Activated CD4-positive, alpha-beta T cell treated with anti-CD3 and anti-CD28 coated beads, Interleukin-2, amount 10 ng/mL, durations not matched to agents 24 days and 14 days (primary cell): ENCODE measurements at regions of chr11 and their contacts with region 1.

Region 1: GRCh38 chr11:10405855-10406592 is 49.0 kb upstream of the AMPD3 start:
- DNase-seq: peak; percentile 83
- H3K4me3 Mint-ChIP-seq: no peak overlapping the region
- H3K27ac Mint-ChIP-seq: no peak overlapping the region
- H3K4me1 Mint-ChIP-seq: peaks cover 18% of the 10 kb centered on the region
- H3K27me3 Mint-ChIP-seq: peaks cover 3% of the 10 kb centered on the region

Region 2: GRCh38 chr11:10285148-10285802 is 120.7 kb before region 1 on chr11:
- intact Hi-C with region 1: no loop called
- DNase-seq: no peak
- H3K4me3 Mint-ChIP-seq: peak overlapping the region; percentile 24
- H3K27ac Mint-ChIP-seq: no peak overlapping the region
- H3K4me1 Mint-ChIP-seq: peaks cover 6% of the 10 kb centered on the region
- H3K27me3 Mint-ChIP-seq: peaks cover 21% of the 10 kb centered on the region

Region 3: GRCh38 chr11:10444725-10445315 is 38.8 kb after region 1 on chr11:
- intact Hi-C with region 1: no loop called
- DNase-seq: peak; percentile 57
- H3K4me3 Mint-ChIP-seq: no peak overlapping the region
- H3K27ac Mint-ChIP-seq: no peak overlapping the region
- H3K4me1 Mint-ChIP-seq: peaks cover 41% of the 10 kb centered on the region
- H3K27me3 Mint-ChIP-seq: peaks cover 24% of the 10 kb centered on the region

Region 4: DNA sequence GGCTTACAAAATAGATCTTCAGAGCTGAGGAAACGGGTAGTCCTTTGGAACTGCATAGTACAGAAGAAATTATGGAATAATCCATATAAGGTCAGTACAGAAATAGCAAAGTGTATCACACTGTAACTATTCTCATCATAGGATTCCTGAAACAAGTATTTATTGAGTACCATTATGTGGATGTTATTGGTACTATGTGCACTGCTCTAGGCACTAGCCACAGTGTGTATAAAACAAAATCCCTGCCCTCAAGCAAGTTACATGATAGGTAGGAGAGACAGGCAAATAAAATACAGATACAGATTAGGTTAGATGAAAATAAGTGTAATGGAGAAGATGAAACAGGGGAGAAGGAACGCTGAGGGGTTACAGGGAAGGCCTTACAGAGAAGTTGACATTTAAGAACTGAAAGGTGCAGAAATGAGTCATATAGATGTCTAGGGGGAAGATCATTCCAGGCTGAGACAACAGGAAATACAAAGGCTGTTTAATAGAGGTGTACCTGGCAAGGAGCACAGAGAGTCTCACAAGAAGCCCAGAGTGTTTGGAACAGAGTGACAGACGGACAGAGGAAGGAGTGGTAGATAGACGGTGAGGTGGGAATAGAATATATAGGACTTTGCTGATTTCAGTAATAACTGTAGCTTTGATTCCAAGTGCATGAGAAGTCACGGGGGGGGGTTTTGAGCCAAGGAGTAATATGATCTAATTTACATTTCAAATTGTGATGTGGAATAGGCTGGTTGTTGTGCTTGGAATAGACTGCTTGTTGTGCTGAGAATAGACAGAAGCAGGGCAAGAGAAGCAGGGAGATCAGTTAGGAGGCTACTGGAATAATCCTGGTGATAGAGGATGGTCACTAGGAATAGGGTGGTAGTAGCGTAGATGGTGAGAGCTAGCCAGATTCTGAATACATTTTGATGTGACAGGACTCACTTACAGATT is 121.2 kb after region 1 on chr11:
- intact Hi-C with region 1: loop called (anchors 5 kb)
- DNase-seq: no peak
- H3K4me3 Mint-ChIP-seq: peak overlapping the region; percentile 30
- H3K27ac Mint-ChIP-seq: peak overlapping the region; percentile 53
- H3K4me1 Mint-ChIP-seq: peaks cover 18% of the 10 kb centered on the region
- H3K27me3 Mint-ChIP-seq: no peaks in the 10 kb centered on the region

Region 5: DNA sequence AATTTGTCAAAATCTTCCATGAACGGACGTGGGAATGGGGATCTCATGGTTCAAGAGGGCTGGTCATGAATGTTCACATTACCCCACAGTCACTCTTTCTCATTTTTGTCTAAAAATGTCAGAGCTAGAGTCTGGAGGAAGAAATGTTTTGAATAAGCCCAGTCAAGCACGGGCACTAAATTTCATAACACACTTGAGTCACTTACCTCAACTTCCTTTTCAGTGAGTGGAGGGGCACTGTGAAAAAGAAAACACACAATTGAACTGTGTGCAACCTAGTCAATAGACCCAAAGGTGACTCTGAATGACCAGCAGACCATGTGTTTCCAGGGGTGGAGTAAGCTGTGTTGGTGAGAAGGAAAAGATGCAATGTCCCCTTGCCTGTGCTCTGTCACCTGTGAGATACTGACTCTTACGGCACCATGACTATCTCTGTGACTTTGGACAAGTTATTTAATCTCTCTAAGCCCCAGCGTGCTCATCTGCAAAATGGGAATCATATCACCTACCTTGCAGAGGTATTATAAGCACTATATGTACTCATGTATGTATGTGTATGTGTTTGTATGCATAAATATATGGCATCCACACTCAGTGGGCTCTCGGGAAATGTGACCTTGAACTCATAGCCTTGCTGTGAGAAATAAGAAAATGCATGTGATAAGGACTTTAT is 200.6 kb after region 1 on chr11:
- intact Hi-C with region 1: no loop called
- DNase-seq: no peak
- H3K4me3 Mint-ChIP-seq: no peak overlapping the region
- H3K27ac Mint-ChIP-seq: no peak overlapping the region
- H3K4me1 Mint-ChIP-seq: peaks cover 9% of the 10 kb centered on the region
- H3K27me3 Mint-ChIP-seq: peaks cover 20% of the 10 kb centered on the region